OCI-LY7 (cell line): ENCODE measurements at regions of chr7 and their contacts with region 1.

Region 1: GRCh38 chr7:130668257-130669084 is at the start of gene COPG2:
- DNase-seq: peak; percentile 90
- H3K4me3 ChIP-seq: peak within 1 kb of the TSS; percentile 91
- H3K27ac ChIP-seq: peak within 1 kb of the TSS; percentile 68
- H3K4me1 ChIP-seq: peaks cover 16% of the 10 kb centered on the region
- CTCF ChIP-seq: no peak
- total RNA-seq, gene COPG2: 24.1 and 29.9 TPM in 2 replicates

Region 2: GRCh38 chr7:130440527-130441365 is 227.7 kb before region 1 on chr7 and contains the start of gene CEP41:
- CTCF ChIA-PET with region 1: no interaction called
- POLR2A ChIA-PET with region 1: no interaction called
- intact Hi-C with region 1: loop called (anchors 1 kb)
- DNase-seq: peak; percentile 98
- H3K4me3 ChIP-seq: peak within 1 kb of the TSS; percentile 71
- H3K27ac ChIP-seq: peak within 1 kb of the TSS; percentile 76
- H3K4me1 ChIP-seq: peaks cover 24% of the 10 kb centered on the region
- CTCF ChIP-seq: no peak
- total RNA-seq, gene CEP41: 19.6 and 25.6 TPM in 2 replicates